Naive thymus-derived CD8-positive, alpha-beta T cell (primary cell): ENCODE measurements at regions of chr14 and their contacts with region 1.

Region 1: GRCh38 chr14:22822571-22823098 is 7.1 kb upstream of the MRPL52 start:
- DNase-seq: peak; percentile 56 to 85 (median 67)
- ATAC-seq: peak; percentile 92 to 93
- H3K4me3 Mint-ChIP-seq: peak overlapping the region; percentile 36 to 82 (median 69)
- H3K27ac Mint-ChIP-seq: peak overlapping the region in 4 of 10 donors; percentile 26 to 66 (median 62)
- H3K4me1 Mint-ChIP-seq: peaks cover 17 to 48% (median 22%) of the 10 kb centered on the region in 4 donors
- H3K27me3 Mint-ChIP-seq: peaks cover 6 to 16% (median 11%) of the 10 kb centered on the region in 5 donors

Region 2: DNA sequence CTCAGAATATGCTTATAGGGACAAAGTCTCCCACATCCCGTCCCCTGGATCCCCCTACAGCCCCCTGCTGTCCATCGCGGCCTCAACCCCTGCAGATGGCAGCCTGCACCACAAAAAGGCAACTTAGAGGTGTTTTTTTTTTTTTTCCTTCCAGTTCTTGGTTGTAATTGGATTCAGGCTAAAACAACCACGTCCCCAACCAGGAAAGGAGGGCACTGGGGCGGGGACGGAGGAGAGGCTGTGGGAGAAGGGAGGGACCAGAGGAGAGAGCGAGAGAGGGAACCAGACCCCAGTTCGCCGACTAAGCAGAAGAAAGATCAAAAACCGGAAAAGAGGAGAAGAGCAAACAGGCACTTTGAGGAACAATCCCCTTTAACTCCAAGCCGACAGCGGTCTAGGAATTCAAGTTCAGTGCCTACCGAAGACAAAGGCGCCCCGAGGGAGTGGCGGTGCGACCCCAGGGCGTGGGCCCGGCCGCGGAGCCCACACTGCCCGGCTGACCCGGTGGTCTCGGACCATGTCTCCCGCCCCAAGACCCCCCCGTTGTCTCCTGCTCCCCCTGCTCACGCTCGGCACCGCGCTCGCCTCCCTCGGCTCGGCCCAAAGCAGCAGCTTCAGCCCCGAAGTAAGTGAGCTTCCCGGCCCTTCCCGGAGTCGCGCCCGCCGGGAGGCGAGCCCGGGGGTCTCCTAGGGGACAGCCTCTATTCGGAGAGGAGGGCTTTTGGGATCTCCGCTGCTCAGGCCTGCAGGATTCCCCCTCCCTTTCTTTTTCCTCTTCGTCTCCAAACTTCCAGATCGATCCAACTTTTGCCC is 13.9 kb after region 1 on chr14 and contains the start of gene MMP14:
- POLR2A ChIA-PET with region 1: interaction called, 10 read pairs
- DNase-seq: no peak
- ATAC-seq: peak; percentile 30 to 39
- H3K4me3 Mint-ChIP-seq: peak within 1 kb of the TSS; percentile 86 to 98 (median 92)
- H3K27ac Mint-ChIP-seq: peak within 1 kb of the TSS; percentile 20 to 94 (median 88)
- H3K4me1 Mint-ChIP-seq: peaks cover 12 to 48% (median 22%) of the 10 kb centered on the region in 4 donors
- H3K27me3 Mint-ChIP-seq: peaks cover 0 to 26% (median 5%) of the 10 kb centered on the region in 5 donors
- polyA plus RNA-seq, gene MMP14: not detected

Region 3: GRCh38 chr14:22852940-22853767 is 30.5 kb after region 1 on chr14:
- POLR2A ChIA-PET with region 1: interaction called, 30 read pairs
- DNase-seq: peak; percentile 80 to 97 (median 88)
- ATAC-seq: peak; percentile 93 to 94
- H3K4me3 Mint-ChIP-seq: peak overlapping the region; percentile 76 to 91 (median 85)
- H3K27ac Mint-ChIP-seq: peak overlapping the region in 9 of 10 donors; percentile 48 to 86 (median 77)
- H3K4me1 Mint-ChIP-seq: peaks cover 8 to 26% (median 14%) of the 10 kb centered on the region in 4 donors
- H3K27me3 Mint-ChIP-seq: peaks cover 7 to 23% (median 10%) of the 10 kb centered on the region in 5 donors

Region 4: GRCh38 chr14:22900081-22900799 is 77.6 kb after region 1 on chr14:
- POLR2A ChIA-PET with region 1: interaction called, 19 read pairs
- DNase-seq: peak in 9 of 10 donors; percentile 14 to 70 (median 41)
- ATAC-seq: peak; percentile 81 to 82
- H3K4me3 Mint-ChIP-seq: no peak overlapping the region
- H3K27ac Mint-ChIP-seq: peak overlapping the region in 5 of 10 donors; percentile 26 to 73 (median 38)
- H3K4me1 Mint-ChIP-seq: peaks cover 6 to 11% (median 6%) of the 10 kb centered on the region in 4 donors
- H3K27me3 Mint-ChIP-seq: no peaks in the 10 kb centered on the region